Transverse colon (tissue), 4 donors: ENCODE measurements at regions of chr21 and their contacts with region 1.

Region 1: GRCh38 chr21:19340303-19340702 is 936.7 kb upstream of the TMPRSS15 start:
- DNase-seq: no peak
- H3K4me3 ChIP-seq: no peak overlapping the region
- H3K27ac ChIP-seq: no peak overlapping the region
- H3K4me1 ChIP-seq: no peaks in the 10 kb centered on the region
- H3K27me3 ChIP-seq: no peaks in the 10 kb centered on the region
- CTCF ChIP-seq: no peak
- EP300 ChIP-seq: no peak
- POLR2A ChIP-seq: no peak

Region 2: DNA sequence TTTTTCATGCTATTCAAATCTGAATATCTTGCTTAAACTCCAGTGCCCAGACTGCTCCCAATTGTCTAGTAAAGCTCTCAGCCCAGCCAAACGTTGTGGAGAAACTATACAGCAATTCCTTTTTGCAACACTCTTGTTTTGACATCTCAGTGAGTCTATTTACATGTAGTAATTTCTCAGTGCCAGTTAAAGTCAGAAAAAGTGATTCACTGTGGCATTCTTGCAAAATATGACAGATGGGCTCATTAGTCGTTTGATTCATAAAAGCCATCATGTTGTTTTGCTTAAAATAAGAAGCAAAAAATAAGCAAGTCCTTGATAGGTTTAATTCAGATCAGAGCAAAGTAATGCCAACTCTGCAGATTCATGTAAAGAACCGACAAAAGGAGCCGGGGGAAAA is 916.0 kb before region 1 on chr21:
- in situ Hi-C with region 1: no loop called
- intact Hi-C with region 1: loop called (anchors 5 kb)
- DNase-seq: no peak
- H3K4me3 ChIP-seq: no peak overlapping the region
- H3K27ac ChIP-seq: no peak overlapping the region
- H3K4me1 ChIP-seq: no peaks in the 10 kb centered on the region
- H3K27me3 ChIP-seq: no peaks in the 10 kb centered on the region
- CTCF ChIP-seq: no peak
- EP300 ChIP-seq: no peak
- POLR2A ChIP-seq: no peak

Region 3: GRCh38 chr21:19171585-19171984 is 168.7 kb before region 1 on chr21:
- in situ Hi-C with region 1: no loop called
- intact Hi-C with region 1: no loop called
- DNase-seq: no peak
- H3K4me3 ChIP-seq: no peak overlapping the region
- H3K27ac ChIP-seq: no peak overlapping the region
- H3K4me1 ChIP-seq: no peaks in the 10 kb centered on the region
- H3K27me3 ChIP-seq: no peaks in the 10 kb centered on the region
- CTCF ChIP-seq: no peak
- EP300 ChIP-seq: no peak
- POLR2A ChIP-seq: no peak